Caco-2 (cell line): ENCODE measurements at regions of chr11 and their contacts with region 1.

Region 1: DNA sequence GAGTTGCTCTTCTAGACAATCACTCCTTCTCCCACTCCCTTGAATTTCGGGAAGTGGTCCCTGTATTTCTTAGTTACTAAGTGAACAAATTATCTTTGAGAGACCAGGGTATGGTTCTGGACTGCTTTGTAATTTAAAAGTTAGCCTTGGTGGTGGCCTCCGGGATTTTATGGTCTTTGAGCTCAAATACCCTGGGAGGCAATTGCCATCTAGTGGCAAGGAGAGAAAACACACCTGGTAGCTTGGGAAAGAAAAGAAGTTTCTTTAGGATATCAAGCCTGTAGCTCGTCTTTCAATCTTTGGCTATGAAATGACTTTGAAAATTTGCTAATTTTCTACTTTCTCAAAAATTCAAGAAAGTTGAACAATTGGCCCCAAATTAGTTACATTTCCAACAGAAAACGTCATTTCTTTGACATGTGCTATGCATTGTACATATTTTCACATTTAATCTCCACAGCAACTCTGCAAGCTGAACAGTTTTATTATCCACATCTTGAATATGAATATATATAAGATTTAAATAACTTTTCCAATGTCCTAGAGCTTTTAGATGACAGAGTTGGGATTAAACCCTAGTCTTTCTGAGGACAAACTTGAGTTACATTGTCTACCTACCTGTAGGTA is 39.1 kb downstream of the MMP27 start:
- DNase-seq: peak; percentile 55 to 68
- H3K4me3 ChIP-seq: no peak overlapping the region
- H3K4me3 Mint-ChIP-seq: no peak overlapping the region
- H3K27ac Mint-ChIP-seq: no peak overlapping the region
- H3K4me1 ChIP-seq: 0 out of 2 replicates have a peak, but pooled peaks cover 5% of the 10 kb centered on the region
- H3K4me1 Mint-ChIP-seq: peaks cover 6% of the 10 kb centered on the region
- H3K27me3 ChIP-seq: no peaks in the 10 kb centered on the region
- H3K27me3 Mint-ChIP-seq: peaks cover 5% of the 10 kb centered on the region
- CTCF ChIP-seq: peak; percentile 98 to 99

Region 2: DNA sequence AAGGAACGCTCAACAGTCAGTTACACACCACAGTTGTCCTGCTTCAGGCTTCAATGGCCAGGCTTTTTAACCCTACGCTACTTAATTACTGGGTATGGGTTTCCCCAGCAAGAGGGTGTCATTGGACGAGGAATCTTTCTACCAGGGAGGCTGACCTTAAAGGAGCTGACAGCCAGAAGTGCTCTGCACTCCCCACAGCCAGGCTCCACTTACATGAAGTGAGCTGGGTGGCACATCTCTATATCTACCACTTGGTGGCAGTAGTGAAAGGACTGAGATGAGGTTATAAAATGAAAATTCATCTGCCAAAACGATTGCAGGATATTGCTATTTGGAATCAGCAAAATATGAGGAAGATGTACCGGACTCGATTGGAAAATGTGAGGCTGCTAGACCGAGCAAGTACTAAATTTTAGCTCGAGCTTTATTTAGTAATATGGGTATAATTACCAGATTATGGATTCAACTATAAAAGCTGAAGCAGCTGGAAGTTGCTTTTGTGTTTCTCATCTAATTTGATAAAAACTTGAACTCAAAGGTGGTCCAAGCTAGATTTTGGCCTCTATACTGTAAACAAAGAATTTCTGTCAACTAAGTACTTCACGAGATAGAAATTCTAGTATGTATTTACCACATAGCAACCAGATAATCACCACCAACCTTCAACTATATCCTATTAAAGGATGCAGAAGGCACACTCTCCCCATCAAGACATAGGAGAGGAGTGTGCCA is 805.6 kb before region 1 on chr11:
- CTCF ChIA-PET with region 1: interaction called, 4 read pairs
- POLR2A ChIA-PET with region 1: no interaction called
- intact Hi-C with region 1: loop called (anchors 5 kb)
- DNase-seq: peak; percentile 73 to 79
- H3K4me3 ChIP-seq: no peak overlapping the region
- H3K4me3 Mint-ChIP-seq: no peak overlapping the region
- H3K27ac Mint-ChIP-seq: peak overlapping the region; percentile 71
- H3K4me1 ChIP-seq: peaks cover 28% of the 10 kb centered on the region
- H3K4me1 Mint-ChIP-seq: peaks cover 25% of the 10 kb centered on the region
- H3K27me3 ChIP-seq: no peaks in the 10 kb centered on the region
- H3K27me3 Mint-ChIP-seq: no peaks in the 10 kb centered on the region
- CTCF ChIP-seq: peak; percentile 89 to 95

Region 3: DNA sequence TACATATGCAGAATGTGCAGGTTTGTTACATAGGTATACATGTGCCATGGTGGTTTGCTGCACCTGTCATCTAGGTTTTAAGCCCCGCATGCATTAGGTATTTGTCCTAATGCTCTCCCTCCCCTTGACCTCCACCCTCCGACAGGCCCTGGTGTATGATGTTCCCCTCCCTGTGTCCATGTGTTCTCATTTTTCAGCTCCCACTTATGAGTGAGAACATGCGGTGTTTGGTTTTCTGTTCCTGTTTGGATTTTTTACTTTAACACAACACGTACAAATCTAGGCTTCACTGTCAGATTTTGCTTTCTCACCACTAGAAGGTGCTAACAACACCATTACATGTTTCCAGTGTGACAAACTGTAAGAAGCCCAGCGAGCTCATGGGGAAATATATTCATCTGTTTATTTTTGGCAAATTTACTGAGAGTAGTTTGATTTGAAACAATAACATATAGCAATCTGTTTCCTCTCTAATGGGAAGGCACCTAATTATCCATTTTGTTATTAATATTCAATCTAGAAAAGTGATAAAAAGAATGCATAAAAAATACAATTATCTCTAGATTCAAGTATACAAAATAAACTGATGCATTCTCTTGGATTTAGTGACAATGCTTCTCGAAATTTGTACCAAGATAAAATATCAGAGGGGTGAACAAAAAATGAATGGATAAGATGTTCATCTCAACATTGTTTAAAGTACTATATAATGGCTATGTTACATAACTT is 372.4 kb before region 1 on chr11:
- CTCF ChIA-PET with region 1: interaction called, 13 read pairs
- POLR2A ChIA-PET with region 1: no interaction called
- intact Hi-C with region 1: loop called (anchors 1 kb)
- DNase-seq: peak in 1 of 2 experiments; percentile 32
- H3K4me3 ChIP-seq: no peak overlapping the region
- H3K4me3 Mint-ChIP-seq: no peak overlapping the region
- H3K27ac Mint-ChIP-seq: no peak overlapping the region
- H3K4me1 ChIP-seq: no peaks in the 10 kb centered on the region
- H3K4me1 Mint-ChIP-seq: peaks cover 6% of the 10 kb centered on the region
- H3K27me3 ChIP-seq: no peaks in the 10 kb centered on the region
- H3K27me3 Mint-ChIP-seq: no peaks in the 10 kb centered on the region
- CTCF ChIP-seq: peak; percentile 72 to 89

Region 4: DNA sequence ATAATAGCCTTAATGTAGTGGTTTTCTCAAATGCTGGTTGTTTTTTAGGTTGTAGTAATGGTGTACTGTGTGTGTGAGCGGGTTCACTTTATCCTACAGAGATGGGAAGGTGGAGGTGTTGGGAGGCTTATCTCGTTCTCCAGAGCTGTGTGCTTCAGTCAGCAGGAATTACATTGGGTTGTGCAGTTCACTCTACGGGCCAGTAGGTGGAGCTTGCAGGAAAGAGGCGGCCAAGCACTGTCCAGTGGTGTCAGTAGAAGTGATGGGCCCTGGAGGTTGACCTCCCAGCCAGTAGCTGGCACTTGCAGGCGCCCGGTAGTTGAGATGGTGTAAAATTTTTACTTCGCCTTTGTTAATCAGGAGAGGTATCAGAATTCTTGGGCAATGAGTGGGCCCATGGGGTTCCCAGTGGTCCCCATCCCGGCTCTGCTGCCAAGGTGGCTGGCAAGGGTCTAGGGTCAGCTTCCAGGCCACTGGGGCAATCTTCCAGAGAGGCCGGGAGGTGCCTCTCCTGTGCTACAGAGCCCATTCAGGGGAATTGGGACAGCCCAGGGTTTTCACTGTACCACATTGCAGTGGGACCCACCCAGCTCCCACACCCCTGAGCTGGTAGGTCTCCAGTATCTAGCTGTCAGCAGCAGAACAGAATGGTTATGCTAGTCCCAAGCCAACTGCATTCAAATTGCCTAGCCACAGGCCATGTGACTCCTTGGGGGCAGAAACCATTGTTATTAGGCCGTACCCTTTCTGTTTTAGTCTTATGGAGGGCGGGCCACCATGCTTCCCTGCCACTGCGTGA is 275.6 kb before region 1 on chr11:
- CTCF ChIA-PET with region 1: interaction called, 11 read pairs
- POLR2A ChIA-PET with region 1: no interaction called
- intact Hi-C with region 1: loop called (anchors 1 kb)
- DNase-seq: peak; percentile 89
- H3K4me3 ChIP-seq: no peak overlapping the region
- H3K4me3 Mint-ChIP-seq: no peak overlapping the region
- H3K27ac Mint-ChIP-seq: peak overlapping the region; percentile 3
- H3K4me1 ChIP-seq: peaks cover 16% of the 10 kb centered on the region
- H3K4me1 Mint-ChIP-seq: peaks cover 21% of the 10 kb centered on the region
- H3K27me3 ChIP-seq: no peaks in the 10 kb centered on the region
- H3K27me3 Mint-ChIP-seq: no peaks in the 10 kb centered on the region
- CTCF ChIP-seq: peak; percentile 97 to 98

Region 5: GRCh38 chr11:102553835-102554282 is 112.6 kb before region 1 on chr11:
- CTCF ChIA-PET with region 1: interaction called, 3 read pairs
- POLR2A ChIA-PET with region 1: no interaction called
- intact Hi-C with region 1: loop called (anchors 5 kb)
- DNase-seq: no peak
- H3K4me3 ChIP-seq: no peak overlapping the region
- H3K4me3 Mint-ChIP-seq: no peak overlapping the region
- H3K27ac Mint-ChIP-seq: peak overlapping the region; percentile 87
- H3K4me1 ChIP-seq: peaks cover 36% of the 10 kb centered on the region
- H3K4me1 Mint-ChIP-seq: peaks cover 30% of the 10 kb centered on the region
- H3K27me3 ChIP-seq: no peaks in the 10 kb centered on the region
- H3K27me3 Mint-ChIP-seq: no peaks in the 10 kb centered on the region
- CTCF ChIP-seq: no peak

Region 6: GRCh38 chr11:102614485-102614884 is 52.0 kb before region 1 on chr11:
- CTCF ChIA-PET with region 1: interaction called, 38 read pairs
- POLR2A ChIA-PET with region 1: no interaction called
- intact Hi-C with region 1: loop called (anchors 1 kb)
- DNase-seq: peak in 1 of 2 experiments; percentile 30
- H3K4me3 ChIP-seq: no peak overlapping the region
- H3K4me3 Mint-ChIP-seq: no peak overlapping the region
- H3K27ac Mint-ChIP-seq: no peak overlapping the region
- H3K4me1 ChIP-seq: peaks cover 28% of the 10 kb centered on the region
- H3K4me1 Mint-ChIP-seq: peaks cover 35% of the 10 kb centered on the region
- H3K27me3 ChIP-seq: no peaks in the 10 kb centered on the region
- H3K27me3 Mint-ChIP-seq: no peaks in the 10 kb centered on the region
- CTCF ChIP-seq: peak in 1 of 2 experiments; percentile 46